Pancreas (tissue), 10 donors: ENCODE measurements at regions of chr9 and their contacts with region 1.

Region 1: DNA sequence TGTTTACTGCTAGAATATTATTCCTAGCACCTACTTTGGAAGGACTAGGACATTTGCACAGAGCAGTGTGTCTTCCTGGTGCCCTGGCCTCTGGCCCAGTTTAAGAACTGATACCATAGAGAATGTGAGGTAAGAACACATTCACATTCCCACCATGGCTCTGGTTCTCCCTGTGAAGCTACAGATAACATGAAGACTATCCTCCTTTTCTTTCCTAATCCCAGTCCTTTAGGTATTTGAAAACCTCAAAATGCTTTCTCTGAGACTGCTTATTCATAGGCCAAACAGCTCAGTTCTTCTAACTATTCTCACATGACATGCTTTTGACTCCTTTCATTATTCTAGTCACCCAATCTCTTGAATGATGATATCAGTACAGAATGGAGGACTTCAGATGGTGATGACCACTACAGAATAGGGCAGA is 11.9 kb downstream of the FAM219A start:
- DNase-seq: no peak
- ATAC-seq: no peak
- H3K4me3 ChIP-seq: no peak overlapping the region
- H3K27ac ChIP-seq: no peak overlapping the region
- H3K4me1 ChIP-seq: no peaks in the 10 kb centered on the region
- H3K27me3 ChIP-seq: no peaks in the 10 kb centered on the region
- CTCF ChIP-seq: no peak

Region 2: GRCh38 chr9:34546834-34547827 is 100.7 kb after region 1 on chr9:
- intact Hi-C with region 1: loop called in 1 of 3 experiments (anchors 10 kb)
- DNase-seq: peak in 4 of 6 donors; percentile 30 to 74 (median 37)
- ATAC-seq: peak; percentile 41 to 71 (median 64)
- H3K4me3 ChIP-seq: no peak overlapping the region
- H3K27ac ChIP-seq: no peak overlapping the region
- H3K4me1 ChIP-seq: no peaks in the 10 kb centered on the region
- H3K27me3 ChIP-seq: no peaks in the 10 kb centered on the region
- CTCF ChIP-seq: peak in 3 of 4 donors; percentile 32 to 47 (median 46)

Region 3: DNA sequence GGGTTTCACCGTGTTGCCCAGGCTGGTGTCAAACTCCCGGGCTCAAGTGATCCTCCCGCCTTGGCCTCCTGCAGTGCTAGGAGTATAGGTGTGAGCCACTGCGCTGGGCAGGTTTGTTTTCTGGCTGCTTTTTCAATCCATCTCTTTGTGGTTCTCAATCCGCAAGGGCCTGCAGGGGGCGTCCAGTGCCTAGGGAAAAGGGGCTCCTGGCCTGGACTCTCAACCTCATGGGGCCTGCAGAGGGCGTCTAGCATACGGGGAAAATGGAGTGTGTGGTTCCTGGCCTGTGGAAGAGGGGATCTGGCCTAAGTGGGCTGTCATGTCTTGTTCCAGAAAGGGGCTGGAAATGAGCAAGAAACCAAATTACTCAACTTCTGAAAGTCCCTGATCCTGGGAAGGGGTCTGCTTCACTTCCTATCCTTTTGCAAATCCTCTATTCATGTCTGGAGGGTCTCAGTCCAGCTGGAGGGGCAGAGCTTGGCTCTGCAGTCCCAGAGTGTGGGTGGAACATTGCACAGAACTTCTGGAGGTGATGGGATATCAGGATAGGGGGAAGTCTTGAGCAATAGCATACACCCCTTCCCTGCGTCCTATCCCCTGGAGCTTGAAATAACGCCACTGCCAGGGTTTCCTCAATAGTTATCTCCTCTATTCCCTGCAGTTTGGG is 228.7 kb after region 1 on chr9:
- intact Hi-C with region 1: no loop called
- DNase-seq: peak in 3 of 6 donors; percentile 34 to 80 (median 57)
- ATAC-seq: peak in 3 of 4 donors; percentile 82 to 96 (median 89)
- H3K4me3 ChIP-seq: no peak overlapping the region
- H3K27ac ChIP-seq: no peak overlapping the region
- H3K4me1 ChIP-seq: no peaks in the 10 kb centered on the region
- H3K27me3 ChIP-seq: no peaks in the 10 kb centered on the region
- CTCF ChIP-seq: peak in 3 of 4 donors; percentile 10 to 45 (median 29)